ENCODE measurements at regions of chr9 and their contacts with region 1.

Region 1: GRCh38 chr9:121259935-121260334 is 8.0 kb upstream of the GSN start:
- DNase-seq: no peak

Region 2: GRCh38 chr9:121222524-121223171 is 37.3 kb before region 1 on chr9:
- intact Hi-C with region 1: loop called (anchors 5 kb)
- DNase-seq: no peak